Activated CD4-positive, alpha-beta T cell treated with anti-CD3 and anti-CD28 coated beads for 36 hours (primary cell): ENCODE measurements at regions of chr11 and their contacts with region 1.

Region 1: GRCh38 chr11:57426929-57427726 is at the start of gene SLC43A3:
- DNase-seq: peak; percentile 90
- ATAC-seq: peak; percentile 67
- H3K4me3 Mint-ChIP-seq: peak within 1 kb of the TSS; percentile 98
- H3K27ac Mint-ChIP-seq: peak within 1 kb of the TSS; percentile 95
- H3K4me1 Mint-ChIP-seq: peaks cover 34% of the 10 kb centered on the region
- H3K27me3 Mint-ChIP-seq: no peaks in the 10 kb centered on the region
- total RNA-seq, gene SLC43A3: 268 to 333 TPM

Region 2: GRCh38 chr11:57335343-57336110 is 91.6 kb before region 1 on chr11 and contains the start of gene SSRP1:
- CTCF ChIA-PET with region 1: no interaction called
- POLR2A ChIA-PET with region 1: no interaction called
- intact Hi-C with region 1: loop called in 1 of 2 experiments (anchors 1 kb)
- DNase-seq: peak; percentile 93
- ATAC-seq: peak; percentile 99
- H3K4me3 Mint-ChIP-seq: peak within 1 kb of the TSS; percentile 97
- H3K27ac Mint-ChIP-seq: peak within 1 kb of the TSS; percentile 100
- H3K4me1 Mint-ChIP-seq: peaks cover 43% of the 10 kb centered on the region
- H3K27me3 Mint-ChIP-seq: no peaks in the 10 kb centered on the region
- total RNA-seq, gene SSRP1: 279 to 296 TPM

Region 3: GRCh38 chr11:57370251-57370650 is 56.9 kb before region 1 on chr11:
- CTCF ChIA-PET with region 1: no interaction called
- POLR2A ChIA-PET with region 1: no interaction called
- intact Hi-C with region 1: no loop called
- DNase-seq: no peak
- ATAC-seq: no peak
- H3K4me3 Mint-ChIP-seq: no peak overlapping the region
- H3K27ac Mint-ChIP-seq: no peak overlapping the region
- H3K4me1 Mint-ChIP-seq: no peaks in the 10 kb centered on the region
- H3K27me3 Mint-ChIP-seq: no peaks in the 10 kb centered on the region

Region 4: GRCh38 chr11:57456960-57457642 is 30.0 kb after region 1 on chr11:
- CTCF ChIA-PET with region 1: interaction called, 21 read pairs
- POLR2A ChIA-PET with region 1: interaction called, 5 read pairs
- intact Hi-C with region 1: loop called (anchors 1 to 2 kb)
- DNase-seq: peak; percentile 87
- ATAC-seq: peak; percentile 36
- H3K4me3 Mint-ChIP-seq: peak overlapping the region; percentile 15
- H3K27ac Mint-ChIP-seq: no peak overlapping the region
- H3K4me1 Mint-ChIP-seq: peaks cover 27% of the 10 kb centered on the region
- H3K27me3 Mint-ChIP-seq: peaks cover 25% of the 10 kb centered on the region

Region 5: GRCh38 chr11:57515332-57516060 is 88.4 kb after region 1 on chr11 and contains the start of gene SLC43A1:
- CTCF ChIA-PET with region 1: no interaction called
- POLR2A ChIA-PET with region 1: no interaction called
- intact Hi-C with region 1: loop called in 1 of 2 experiments (anchors 5 kb)
- DNase-seq: peak; percentile 62
- ATAC-seq: peak; percentile 46
- H3K4me3 Mint-ChIP-seq: peak within 1 kb of the TSS; percentile 91
- H3K27ac Mint-ChIP-seq: peak within 1 kb of the TSS; percentile 91
- H3K4me1 Mint-ChIP-seq: peaks cover 31% of the 10 kb centered on the region
- H3K27me3 Mint-ChIP-seq: no peaks in the 10 kb centered on the region
- total RNA-seq, gene SLC43A1: 27.6 to 28.7 TPM

Region 6: GRCh38 chr11:57667736-57668435 is 240.8 kb after region 1 on chr11 and contains the start of gene ZDHHC5:
- CTCF ChIA-PET with region 1: no interaction called
- POLR2A ChIA-PET with region 1: no interaction called
- intact Hi-C with region 1: loop called in 1 of 2 experiments (anchors 1 kb)
- DNase-seq: peak; percentile 100
- ATAC-seq: peak; percentile 88
- H3K4me3 Mint-ChIP-seq: peak within 1 kb of the TSS; percentile 99
- H3K27ac Mint-ChIP-seq: peak within 1 kb of the TSS; percentile 99
- H3K4me1 Mint-ChIP-seq: peaks cover 37% of the 10 kb centered on the region
- H3K27me3 Mint-ChIP-seq: no peaks in the 10 kb centered on the region
- total RNA-seq, gene ZDHHC5: 46.2 to 60.0 TPM

Region 7: GRCh38 chr11:57741132-57742086 is 314.3 kb after region 1 on chr11 and contains the start of gene SELENOH:
- CTCF ChIA-PET with region 1: no interaction called
- POLR2A ChIA-PET with region 1: interaction called, 5 read pairs
- intact Hi-C with region 1: loop called in 1 of 2 experiments (anchors 2 kb)
- DNase-seq: peak; percentile 98
- ATAC-seq: peak; percentile 94
- H3K4me3 Mint-ChIP-seq: peak within 1 kb of the TSS; percentile 98
- H3K27ac Mint-ChIP-seq: peak within 1 kb of the TSS; percentile 100
- H3K4me1 Mint-ChIP-seq: peaks cover 28% of the 10 kb centered on the region
- H3K27me3 Mint-ChIP-seq: no peaks in the 10 kb centered on the region
- total RNA-seq, gene SELENOH: 117 to 244 TPM